ENCODE measurements at regions of chr18 and their contacts with region 1.

Region 1: DNA sequence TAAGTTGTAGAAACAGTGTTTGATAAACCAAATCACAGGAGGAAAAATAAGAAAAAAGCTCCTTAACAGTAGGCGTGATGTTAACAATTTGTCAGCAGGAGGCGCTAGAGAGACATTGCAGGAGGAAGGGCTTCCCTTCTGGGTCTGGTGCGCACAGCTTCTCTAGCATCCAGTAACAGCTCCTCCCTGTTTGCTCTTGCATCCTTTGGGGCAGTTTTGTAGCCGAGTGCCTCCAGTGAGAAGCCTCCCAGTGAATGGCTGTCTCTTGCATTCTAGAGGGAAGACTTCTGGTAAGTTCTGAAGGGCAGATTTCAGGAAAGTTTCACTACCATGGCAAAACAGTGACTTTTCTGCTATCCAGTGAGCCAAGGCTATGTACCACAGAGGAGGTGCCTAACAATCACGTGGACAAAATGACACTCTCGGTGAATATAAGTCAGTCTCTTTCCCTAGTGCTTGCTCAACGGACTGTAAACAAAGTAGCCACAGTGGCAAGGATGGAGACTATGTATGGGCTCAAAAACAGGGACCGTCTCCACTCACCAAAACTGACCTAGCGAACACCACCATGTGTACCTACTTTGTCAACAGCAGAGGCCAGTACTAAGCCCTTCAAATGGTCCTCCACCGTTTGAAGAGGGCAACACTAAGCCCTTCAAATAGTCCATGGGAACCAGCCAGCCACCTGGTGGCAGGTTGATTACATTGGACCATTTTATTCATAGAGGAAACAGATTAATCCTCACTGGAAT is 9.6 kb upstream of the ZNF396 start:
- DNase-seq: peak; percentile 69
- CTCF ChIP-seq: peak; percentile 77

Region 2: GRCh38 chr18:34695310-34695709 is 691.5 kb before region 1 on chr18:
- in situ Hi-C with region 1: no loop called
- DNase-seq: no peak
- CTCF ChIP-seq: no peak

Region 3: DNA sequence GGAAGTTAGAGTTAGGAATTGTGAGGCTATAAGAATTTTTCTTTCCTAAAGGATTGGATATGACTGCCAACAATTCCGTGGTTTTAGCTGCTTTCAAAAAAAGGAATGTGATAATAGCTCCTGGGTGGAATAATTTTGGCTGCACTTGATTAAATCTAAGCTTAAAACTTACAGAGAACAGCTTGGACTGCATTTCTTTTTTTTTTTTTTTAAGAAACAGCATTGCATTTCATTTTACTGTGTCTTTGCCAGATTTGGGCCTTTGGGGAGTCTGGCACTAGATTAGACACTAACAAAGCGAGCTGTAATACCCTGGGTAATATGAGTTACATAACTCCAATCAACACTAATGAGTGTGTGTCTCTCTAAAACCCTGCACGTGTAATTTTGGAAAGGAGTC is 183.7 kb before region 1 on chr18:
- in situ Hi-C with region 1: no loop called
- DNase-seq: no peak
- CTCF ChIP-seq: no peak

Region 4: DNA sequence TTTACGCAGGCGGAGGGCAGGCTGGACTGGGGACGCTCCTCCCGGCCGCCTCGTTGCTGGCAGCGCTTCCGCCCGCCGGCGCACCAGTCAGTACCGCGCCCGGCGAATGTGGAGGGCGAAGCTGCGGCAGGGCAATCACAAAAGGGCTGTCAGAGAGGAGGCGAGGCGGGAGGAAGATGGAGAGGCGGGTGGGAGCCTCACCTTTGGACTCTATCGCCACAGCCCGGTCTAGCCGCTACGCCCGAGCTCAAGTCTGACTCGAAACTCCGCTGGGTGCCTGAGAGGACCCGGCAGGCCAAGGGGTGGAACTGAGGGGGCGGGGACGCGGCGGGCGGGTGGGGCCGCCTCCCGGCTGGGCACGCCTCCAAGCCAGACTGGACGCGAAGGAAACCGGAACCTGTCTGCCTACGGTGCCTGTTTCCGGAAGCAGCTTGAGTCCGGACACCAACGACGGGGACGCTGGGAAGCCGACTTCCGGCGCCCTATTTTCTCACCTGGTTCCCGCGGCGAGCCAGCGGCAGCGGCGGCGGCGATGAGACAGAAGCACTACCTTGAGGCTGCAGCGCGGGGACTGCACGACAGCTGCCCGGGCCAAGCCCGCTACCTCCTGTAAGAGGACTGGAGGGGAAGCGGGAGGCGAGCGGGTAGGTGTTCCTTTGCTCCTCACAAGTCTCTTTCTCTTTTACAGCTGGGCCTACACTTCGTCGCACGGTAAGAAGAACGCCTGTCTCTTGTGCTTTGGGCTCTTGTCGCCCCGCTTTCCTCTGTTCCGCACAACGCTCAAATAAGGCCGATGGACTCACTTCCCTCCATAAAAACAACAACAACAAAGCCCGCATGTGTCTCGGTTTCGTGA is 585.6 kb after region 1 on chr18 and contains the start of gene RMP24:
- in situ Hi-C with region 1: loop called (anchors 25 kb)
- DNase-seq: peak; percentile 95
- CTCF ChIP-seq: no peak

Measured in GM13976 (cell line).